Gastrocnemius medialis (tissue), 4 donors: ENCODE measurements at regions of chr1 and their contacts with region 1.

Region 1: DNA sequence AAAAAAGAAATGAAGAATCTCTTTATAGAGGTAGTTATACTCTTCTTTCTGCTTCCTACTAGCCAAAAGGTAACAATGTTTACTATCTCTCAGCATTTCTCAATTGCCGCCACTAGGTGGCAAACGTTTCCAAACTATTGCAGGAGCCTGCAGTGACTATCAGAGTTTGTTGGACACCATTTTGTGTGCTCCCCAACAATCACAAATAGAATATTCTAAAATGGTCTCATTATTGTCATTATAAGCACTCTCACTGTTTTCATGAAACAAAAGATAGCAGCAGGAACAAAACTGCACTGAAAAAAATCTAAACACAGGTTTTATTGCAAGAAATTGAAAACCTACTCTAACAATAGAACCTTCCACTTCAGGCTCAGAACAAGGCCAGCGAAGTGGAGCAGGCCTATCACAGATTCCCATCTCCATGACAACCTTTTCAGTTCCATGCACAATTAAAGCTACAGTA is 83.9 kb upstream of the PLPPR4 start:
- DNase-seq: peak; percentile 43 to 56
- ATAC-seq: peak; percentile 91 to 97
- H3K4me3 ChIP-seq: no peak overlapping the region
- H3K27ac ChIP-seq: peak overlapping the region in 1 of 4 donors; percentile 28
- H3K4me1 ChIP-seq: peaks cover 0 to 8% of the 10 kb centered on the region in 2 donors
- H3K27me3 ChIP-seq: no peaks in the 10 kb centered on the region
- CTCF ChIP-seq: peak; percentile 74 to 81 (median 76)
- POLR2A ChIP-seq: no peak

Region 2: DNA sequence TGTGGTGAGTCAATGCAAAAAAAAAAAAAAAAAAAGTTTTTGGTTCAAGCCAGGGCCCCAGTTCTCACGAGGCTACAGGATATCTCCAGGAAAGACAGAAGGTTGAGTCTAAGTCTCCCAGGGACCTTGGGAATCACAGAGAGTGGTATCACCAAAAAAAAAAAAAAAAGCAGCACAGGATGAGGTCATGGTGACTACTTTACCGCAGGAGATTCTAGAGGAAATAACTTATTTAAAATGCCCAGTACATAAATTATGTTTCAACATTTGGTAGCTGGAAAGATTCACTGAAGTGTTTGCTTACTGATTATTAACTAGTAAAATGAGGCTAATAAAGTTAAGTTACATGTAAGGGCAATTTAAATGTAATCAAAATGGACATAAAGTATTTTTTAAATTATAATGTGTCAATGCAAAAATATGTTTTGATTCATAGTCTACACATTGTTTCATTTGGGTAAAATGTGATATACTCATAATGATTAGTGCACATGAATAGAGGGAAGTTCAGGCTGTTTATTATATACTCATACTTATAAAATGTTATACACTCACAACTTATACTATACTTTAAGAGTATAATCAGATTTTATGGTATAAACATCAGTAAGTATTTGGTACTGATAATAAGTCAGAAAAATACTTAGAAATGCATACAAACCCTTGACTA is 259.8 kb before region 1 on chr1:
- in situ Hi-C with region 1: no loop called
- intact Hi-C with region 1: no loop called
- DNase-seq: no peak
- ATAC-seq: no peak
- H3K4me3 ChIP-seq: no peak overlapping the region
- H3K27ac ChIP-seq: no peak overlapping the region
- H3K4me1 ChIP-seq: no peaks in the 10 kb centered on the region
- H3K27me3 ChIP-seq: no peaks in the 10 kb centered on the region
- CTCF ChIP-seq: no peak
- POLR2A ChIP-seq: no peak

Region 3: GRCh38 chr1:99457381-99458165 is 277.2 kb after region 1 on chr1:
- in situ Hi-C with region 1: loop called in 1 of 4 experiments (anchors 25 kb)
- intact Hi-C with region 1: no loop called
- DNase-seq: no peak
- ATAC-seq: no peak
- H3K4me3 ChIP-seq: no peak overlapping the region
- H3K27ac ChIP-seq: no peak overlapping the region
- H3K4me1 ChIP-seq: no peaks in the 10 kb centered on the region
- H3K27me3 ChIP-seq: no peaks in the 10 kb centered on the region
- CTCF ChIP-seq: no peak
- POLR2A ChIP-seq: no peak